Posterior vena cava (tissue), 2 donors: ENCODE measurements at regions of chr2 and their contacts with region 1.

Region 1: DNA sequence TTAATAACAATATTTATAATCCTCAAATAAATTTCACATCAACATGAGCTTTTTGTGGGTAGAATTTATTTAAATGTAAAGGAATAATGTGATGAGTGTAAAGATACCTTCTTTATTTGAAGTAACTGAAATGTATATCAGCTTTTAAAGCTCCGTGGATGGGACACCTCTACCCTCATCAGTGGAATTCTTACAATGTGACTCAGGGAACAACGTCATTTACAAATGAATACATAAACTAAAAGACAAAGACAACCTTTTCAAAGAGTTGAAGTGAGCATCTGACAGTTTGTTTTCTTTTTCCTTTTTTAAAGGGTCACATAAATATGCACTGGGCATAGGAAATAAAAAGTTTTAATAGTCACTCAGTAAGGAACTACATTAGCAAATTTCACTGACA is 1127.0 kb upstream of the CRIM1 start:
- DNase-seq: no peak

Region 2: DNA sequence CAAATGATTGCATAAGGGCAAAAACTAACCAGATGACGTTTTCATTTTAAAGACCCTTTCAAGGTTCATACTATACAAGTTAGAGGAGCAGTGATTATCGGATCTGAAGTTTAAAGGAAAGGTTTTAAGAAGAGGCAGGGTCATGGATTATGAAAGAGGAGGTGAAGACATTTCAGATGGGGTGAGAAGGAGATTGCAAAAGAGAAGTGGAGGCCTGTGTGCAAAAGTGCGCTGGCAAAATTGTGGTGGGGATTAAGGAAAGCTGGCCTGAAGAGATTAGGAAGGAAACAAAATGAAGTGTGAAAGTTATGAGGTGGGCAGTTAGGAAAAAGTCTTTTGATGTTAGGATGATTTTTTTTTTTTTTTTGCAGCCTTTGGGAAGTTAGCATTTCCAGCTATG is 693.8 kb before region 1 on chr2:
- intact Hi-C with region 1: no loop called
- DNase-seq: no peak

Region 3: DNA sequence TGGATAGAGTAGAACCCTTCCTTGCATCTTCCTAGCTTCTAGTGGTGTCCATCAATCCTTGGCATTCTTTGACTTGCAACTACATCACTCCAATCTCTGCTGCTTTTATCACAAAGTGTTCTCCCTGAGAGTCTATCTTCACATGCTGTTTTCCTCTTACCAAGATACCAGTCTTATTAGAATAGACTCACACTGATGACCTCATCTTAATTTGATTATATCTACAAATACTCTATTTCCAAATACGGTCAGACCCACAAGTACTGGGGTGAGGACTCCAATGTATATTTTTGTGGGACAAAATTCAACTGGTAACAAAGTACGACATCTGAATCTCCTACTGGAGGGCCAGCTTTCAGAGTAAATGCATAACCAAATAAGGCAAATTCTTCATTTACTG is 22.3 kb before region 1 on chr2:
- intact Hi-C with region 1: loop called in 1 of 2 experiments (anchors 1 kb)
- DNase-seq: no peak